Activated T-helper 2 cell treated with anti-CD3 and anti-CD28 coated beads, Interferon-gamma antibody, Interleukin-2, Interleukin-4, amounts not matched to agents 10 μg/mL and 5 μg/mL and 100 μg/mL, durations not matched to agents 14 hours and 24 hours and 36 hours (primary cell): ENCODE measurements at regions of chr10 and their contacts with region 1.

Region 1: DNA sequence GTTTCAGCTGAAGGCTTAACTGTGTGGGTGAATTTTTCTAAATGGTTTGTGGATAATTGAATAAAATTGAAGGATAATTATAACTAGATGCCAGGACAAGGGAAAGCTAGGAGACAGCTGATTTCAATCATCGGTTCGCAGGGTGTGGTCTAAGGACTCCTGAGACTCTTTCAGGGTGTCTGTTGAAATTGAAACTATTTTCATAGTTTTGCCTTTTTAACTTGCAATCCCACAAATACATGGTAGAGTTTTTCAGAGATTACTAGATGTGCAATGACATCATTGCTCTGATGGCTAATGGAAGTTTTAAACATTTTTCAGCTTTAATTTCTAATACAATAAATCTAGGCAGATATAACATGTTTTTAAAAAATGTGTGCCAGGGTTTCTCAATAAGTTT is 18.5 kb downstream of the TRUB1 start:
- DNase-seq: no peak
- H3K4me3 Mint-ChIP-seq: no peak overlapping the region
- H3K27ac Mint-ChIP-seq: peak overlapping the region; percentile 28
- H3K4me1 Mint-ChIP-seq: peaks cover 26% of the 10 kb centered on the region
- H3K27me3 Mint-ChIP-seq: no peaks in the 10 kb centered on the region

Region 2: DNA sequence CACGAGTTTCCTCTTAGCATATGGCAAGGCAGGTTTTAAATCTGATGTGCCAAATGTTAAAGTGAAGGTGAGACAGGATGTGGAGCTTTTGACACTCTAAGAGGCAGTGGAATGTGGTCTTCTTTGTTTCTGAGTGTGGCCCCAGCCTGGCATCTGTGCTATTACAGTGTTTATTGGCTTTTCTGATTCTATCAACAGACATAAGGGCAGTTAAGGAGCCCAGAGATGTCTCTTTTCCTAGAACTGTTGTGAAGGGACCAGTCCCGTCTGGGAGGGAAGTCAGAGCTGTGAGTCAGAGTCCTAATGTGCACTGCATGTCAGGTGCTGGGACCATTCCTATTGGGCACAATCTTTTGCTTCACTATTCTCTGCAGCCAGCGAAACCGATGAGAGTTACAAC is 14.0 kb after region 1 on chr10:
- intact Hi-C with region 1: loop called (anchors 2 kb)
- DNase-seq: no peak
- H3K4me3 Mint-ChIP-seq: no peak overlapping the region
- H3K27ac Mint-ChIP-seq: peak overlapping the region; percentile 71
- H3K4me1 Mint-ChIP-seq: peaks cover 32% of the 10 kb centered on the region
- H3K27me3 Mint-ChIP-seq: no peaks in the 10 kb centered on the region

Region 3: GRCh38 chr10:114987995-114988394 is 31.5 kb after region 1 on chr10:
- intact Hi-C with region 1: no loop called
- DNase-seq: no peak
- H3K4me3 Mint-ChIP-seq: no peak overlapping the region
- H3K27ac Mint-ChIP-seq: no peak overlapping the region
- H3K4me1 Mint-ChIP-seq: no peaks in the 10 kb centered on the region
- H3K27me3 Mint-ChIP-seq: no peaks in the 10 kb centered on the region

Region 4: DNA sequence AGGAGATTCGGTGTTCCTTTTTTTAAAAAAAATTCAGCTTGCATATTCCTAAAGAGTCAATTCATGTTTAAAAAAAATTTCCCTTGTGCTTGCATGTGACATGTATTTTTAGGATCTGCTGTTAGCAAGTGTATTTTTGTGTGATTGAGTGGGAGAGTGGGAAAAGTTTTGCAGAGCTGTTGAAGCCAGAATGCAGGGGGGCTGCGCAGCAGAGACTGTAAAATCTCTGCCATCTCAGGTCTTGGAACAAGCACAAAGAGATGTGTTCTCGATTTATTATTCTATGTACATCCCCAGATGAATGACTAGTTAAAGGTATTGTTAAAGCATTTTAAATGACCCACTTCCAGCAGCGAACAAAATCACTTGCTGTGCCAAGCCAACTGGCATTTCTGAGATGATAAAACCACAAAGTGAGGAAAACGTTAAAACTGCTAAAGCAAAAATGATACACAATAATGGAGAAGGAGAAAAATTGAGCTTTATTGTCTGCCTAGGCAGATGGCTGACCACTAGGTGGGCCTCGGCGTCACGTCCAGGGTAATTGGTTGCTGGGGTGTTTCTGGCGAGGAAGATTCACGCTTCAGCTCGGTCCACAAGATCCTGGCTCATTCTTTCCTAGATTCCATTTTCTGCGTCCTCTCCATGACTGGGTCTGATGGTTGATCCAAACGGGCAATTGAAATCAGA is 69.7 kb after region 1 on chr10:
- intact Hi-C with region 1: no loop called
- DNase-seq: no peak
- H3K4me3 Mint-ChIP-seq: no peak overlapping the region
- H3K27ac Mint-ChIP-seq: no peak overlapping the region
- H3K4me1 Mint-ChIP-seq: no peaks in the 10 kb centered on the region
- H3K27me3 Mint-ChIP-seq: peaks cover 10% of the 10 kb centered on the region